ENCODE measurements at regions of chr11 and their contacts with region 1.

Region 1: DNA sequence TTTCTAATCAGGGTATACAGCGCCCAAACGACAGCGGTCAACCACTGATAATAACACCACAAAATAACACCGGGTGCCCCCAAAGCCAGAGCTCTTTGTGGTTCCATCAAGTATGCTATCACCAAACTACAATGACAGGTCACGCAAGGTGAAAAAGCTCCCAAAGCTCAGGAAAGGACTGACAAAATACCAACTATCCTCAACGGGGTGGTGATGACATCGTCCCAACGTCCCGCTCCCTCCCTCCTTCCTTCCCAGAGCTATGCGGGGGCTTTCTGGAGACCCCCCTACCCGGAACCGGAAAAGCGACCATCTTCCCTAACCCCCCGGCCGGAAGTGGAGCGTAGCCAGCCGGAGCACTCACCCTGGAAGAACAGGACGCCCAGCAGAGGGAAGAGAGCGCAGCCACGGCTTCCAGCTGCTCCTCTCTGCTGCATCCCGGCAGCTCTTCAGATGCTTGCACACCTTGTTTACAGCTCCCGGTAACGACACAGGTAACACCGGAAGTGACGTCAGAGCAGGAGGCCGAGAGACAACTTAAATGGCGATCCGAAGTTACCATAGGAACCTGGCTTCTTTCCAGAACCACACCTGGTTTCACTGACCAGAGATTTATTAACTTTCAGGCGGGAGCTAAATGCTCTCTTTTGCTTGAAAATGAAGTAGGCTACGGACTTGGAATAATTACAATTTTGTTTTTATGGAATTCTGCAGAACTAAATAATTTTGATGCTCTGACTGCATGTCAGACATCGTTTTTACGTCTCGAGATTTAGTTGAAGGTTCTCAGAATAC is at the start of gene MPZL3:
- DNase-seq: peak; percentile 90
- ATAC-seq: peak; percentile 65
- H3K4me3 Mint-ChIP-seq: peak within 1 kb of the TSS; percentile 82
- H3K27ac Mint-ChIP-seq: peak within 1 kb of the TSS; percentile 96
- H3K4me1 Mint-ChIP-seq: peaks cover 36% of the 10 kb centered on the region
- H3K27me3 Mint-ChIP-seq: no peaks in the 10 kb centered on the region
- total RNA-seq, gene MPZL3: 45.9 to 53.2 TPM

Region 2: GRCh38 chr11:118211006-118211405 is 41.0 kb before region 1 on chr11:
- CTCF ChIA-PET with region 1: interaction called, 6 read pairs
- POLR2A ChIA-PET with region 1: no interaction called
- intact Hi-C with region 1: loop called in 1 of 2 experiments (anchors 1 kb)
- DNase-seq: no peak
- ATAC-seq: no peak
- H3K4me3 Mint-ChIP-seq: no peak overlapping the region
- H3K27ac Mint-ChIP-seq: peak overlapping the region; percentile 59
- H3K4me1 Mint-ChIP-seq: peaks cover 79% of the 10 kb centered on the region
- H3K27me3 Mint-ChIP-seq: no peaks in the 10 kb centered on the region

Region 3: GRCh38 chr11:118216621-118217481 is 35.2 kb before region 1 on chr11:
- CTCF ChIA-PET with region 1: interaction called, 6 read pairs
- POLR2A ChIA-PET with region 1: no interaction called
- intact Hi-C with region 1: loop called in 1 of 2 experiments (anchors 1 kb)
- DNase-seq: peak; percentile 76
- ATAC-seq: peak; percentile 73
- H3K4me3 Mint-ChIP-seq: peak overlapping the region; percentile 76
- H3K27ac Mint-ChIP-seq: peak overlapping the region; percentile 100
- H3K4me1 Mint-ChIP-seq: peaks cover 97% of the 10 kb centered on the region
- H3K27me3 Mint-ChIP-seq: no peaks in the 10 kb centered on the region

Region 4: GRCh38 chr11:120034881-120035630 is 1783.0 kb after region 1 on chr11:
- CTCF ChIA-PET with region 1: no interaction called
- POLR2A ChIA-PET with region 1: no interaction called
- intact Hi-C with region 1: no loop called
- DNase-seq: no peak
- ATAC-seq: no peak
- H3K4me3 Mint-ChIP-seq: no peak overlapping the region
- H3K27ac Mint-ChIP-seq: no peak overlapping the region
- H3K4me1 Mint-ChIP-seq: no peaks in the 10 kb centered on the region
- H3K27me3 Mint-ChIP-seq: no peaks in the 10 kb centered on the region